ENCODE measurements at regions of chr6 and their contacts with region 1.

Region 1: DNA sequence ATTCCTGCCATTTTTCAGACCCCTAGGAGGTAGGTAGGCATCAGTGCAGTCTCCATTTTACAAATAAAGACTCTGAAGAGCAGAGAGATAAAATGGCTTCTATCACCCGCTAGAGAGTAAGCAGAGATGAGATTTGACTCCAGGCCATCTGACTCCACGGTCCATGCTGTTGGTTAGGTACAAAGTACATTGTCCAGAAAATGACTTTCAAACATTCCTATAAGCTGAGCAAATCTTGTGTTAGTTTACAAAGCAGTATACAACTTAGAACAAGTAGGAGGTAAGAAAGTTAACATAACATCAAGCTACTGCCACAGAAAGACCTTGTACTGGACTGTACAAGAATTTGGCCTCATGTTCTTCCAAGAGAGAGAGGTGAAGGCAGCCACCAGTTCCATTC is 14.9 kb downstream of the BTN1A1 start:
- DNase-seq: no peak
- H3K4me3 Mint-ChIP-seq: no peak overlapping the region
- H3K27ac Mint-ChIP-seq: no peak overlapping the region
- H3K4me1 Mint-ChIP-seq: peaks cover 1% of the 10 kb centered on the region
- H3K27me3 Mint-ChIP-seq: peaks cover 3% of the 10 kb centered on the region

Region 2: GRCh38 chr6:26501482-26501986 is 13.4 kb before region 1 on chr6:
- intact Hi-C with region 1: loop called (anchors 2 kb)
- DNase-seq: peak; percentile 5
- H3K4me3 Mint-ChIP-seq: peak overlapping the region; percentile 82
- H3K27ac Mint-ChIP-seq: no peak overlapping the region
- H3K4me1 Mint-ChIP-seq: peaks cover 24% of the 10 kb centered on the region
- H3K27me3 Mint-ChIP-seq: peaks cover 55% of the 10 kb centered on the region

Region 3: GRCh38 chr6:26532699-26533531 is 17.9 kb after region 1 on chr6:
- intact Hi-C with region 1: no loop called
- DNase-seq: peak; percentile 86
- H3K4me3 Mint-ChIP-seq: peak overlapping the region; percentile 94
- H3K27ac Mint-ChIP-seq: peak overlapping the region; percentile 95
- H3K4me1 Mint-ChIP-seq: peaks cover 46% of the 10 kb centered on the region
- H3K27me3 Mint-ChIP-seq: peaks cover 3% of the 10 kb centered on the region

Measured in activated T-helper 1 cell treated with anti-CD3 and anti-CD28 coated beads, Interleukin-12 subunit alpha, Interleukin-12 subunit beta, Interleukin-2, Interleukin-4 antibody, amounts not matched to agents 30 ng/mL and 10 ng/mL and 1 ng/mL, durations not matched to agents 14 hours and 24 hours and 36 hours (primary cell).